ENCODE measurements at regions of chr11 and their contacts with region 1.

Region 1: GRCh38 chr11:116193321-116194131 is 579.3 kb downstream of the BUD13 start:
- DNase-seq: peak; percentile 99
- H3K4me3 ChIP-seq: peak overlapping the region; percentile 58
- H3K4me3 Mint-ChIP-seq: peak overlapping the region; percentile 68
- H3K27ac Mint-ChIP-seq: peak overlapping the region; percentile 51
- H3K4me1 ChIP-seq: peaks cover 36% of the 10 kb centered on the region
- H3K4me1 Mint-ChIP-seq: peaks cover 42% of the 10 kb centered on the region
- H3K27me3 ChIP-seq: no peaks in the 10 kb centered on the region
- H3K27me3 Mint-ChIP-seq: no peaks in the 10 kb centered on the region
- CTCF ChIP-seq: peak; percentile 35 to 51

Region 2: DNA sequence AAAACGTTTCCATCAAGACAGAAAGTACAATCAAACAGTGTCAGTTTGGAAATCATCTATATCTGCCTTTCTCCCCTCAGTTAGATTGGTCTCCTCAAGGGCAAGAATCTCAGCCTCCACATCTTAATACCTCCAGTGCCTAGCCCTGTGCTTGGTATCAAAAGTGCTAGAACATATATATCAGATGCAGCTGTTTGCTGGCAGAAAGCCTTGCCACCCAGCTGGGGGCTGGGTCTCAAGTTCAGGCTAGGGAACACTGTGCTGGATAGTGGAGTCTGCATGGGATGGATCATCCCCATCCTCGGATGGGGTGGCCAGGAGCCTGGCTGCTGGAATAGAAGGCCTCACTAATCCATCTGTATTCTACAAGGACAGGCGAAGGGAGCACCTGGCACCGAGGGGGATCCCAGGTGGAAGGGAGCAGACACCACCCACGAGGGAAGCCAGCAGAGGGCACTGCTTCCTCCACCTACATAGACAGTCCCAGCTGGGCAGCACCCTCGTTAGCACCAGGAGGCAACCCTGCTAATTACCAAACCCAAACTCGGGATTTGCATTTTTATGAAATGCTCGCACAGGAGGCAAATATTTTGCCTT is 22.9 kb before region 1 on chr11:
- CTCF ChIA-PET with region 1: interaction called, 10 read pairs
- POLR2A ChIA-PET with region 1: interaction called, 3 read pairs
- intact Hi-C with region 1: loop called (anchors 1 kb)
- DNase-seq: peak in 1 of 2 experiments; percentile 66
- H3K4me3 ChIP-seq: no peak overlapping the region
- H3K4me3 Mint-ChIP-seq: no peak overlapping the region
- H3K27ac Mint-ChIP-seq: no peak overlapping the region
- H3K4me1 ChIP-seq: peaks cover 12% of the 10 kb centered on the region
- H3K4me1 Mint-ChIP-seq: peaks cover 27% of the 10 kb centered on the region
- H3K27me3 ChIP-seq: no peaks in the 10 kb centered on the region
- H3K27me3 Mint-ChIP-seq: no peaks in the 10 kb centered on the region
- CTCF ChIP-seq: peak; percentile 56 to 82

Region 3: GRCh38 chr11:116217006-116217405 is 23.5 kb after region 1 on chr11:
- CTCF ChIA-PET with region 1: interaction called, 13 read pairs
- POLR2A ChIA-PET with region 1: interaction called, 3 read pairs
- intact Hi-C with region 1: loop called (anchors 2 kb)
- DNase-seq: peak; percentile 62 to 73
- H3K4me3 ChIP-seq: no peak overlapping the region
- H3K4me3 Mint-ChIP-seq: no peak overlapping the region
- H3K27ac Mint-ChIP-seq: no peak overlapping the region
- H3K4me1 ChIP-seq: no peaks in the 10 kb centered on the region
- H3K4me1 Mint-ChIP-seq: peaks cover under 1% of the 10 kb centered on the region
- H3K27me3 ChIP-seq: no peaks in the 10 kb centered on the region; the same call in 1 of the 2 replicates
- H3K27me3 Mint-ChIP-seq: no peaks in the 10 kb centered on the region
- CTCF ChIP-seq: peak; percentile 93 to 96

Region 4: DNA sequence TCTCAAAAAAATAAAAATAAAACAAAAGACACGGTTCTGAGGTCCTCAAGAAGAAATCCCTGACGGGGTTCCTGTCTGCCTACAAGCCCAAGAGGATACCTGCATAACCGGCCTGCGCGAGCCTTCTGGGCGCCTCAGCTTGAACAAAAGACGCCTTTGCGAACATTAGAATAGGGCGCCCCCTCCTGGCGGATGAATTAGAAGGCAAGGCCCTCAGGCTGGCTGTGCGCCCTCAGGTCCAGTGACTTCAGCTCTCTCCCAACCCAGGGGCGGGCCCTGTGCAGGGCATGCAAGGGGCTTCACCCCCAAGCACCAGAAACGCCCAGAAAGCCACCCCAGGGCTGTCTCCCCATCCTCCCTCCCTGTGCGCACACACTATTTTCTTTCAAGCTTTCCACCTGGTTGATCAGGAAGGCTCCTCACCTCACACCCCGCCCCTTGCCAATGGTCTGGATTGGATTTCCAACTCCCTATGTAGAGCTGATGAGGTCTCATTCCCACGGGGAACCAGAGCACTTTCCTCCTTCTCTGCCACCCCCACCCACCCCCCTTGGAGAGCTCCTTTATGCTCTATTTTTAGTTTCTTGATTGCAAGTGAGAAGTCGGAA is 306.0 kb after region 1 on chr11:
- CTCF ChIA-PET with region 1: no interaction called
- POLR2A ChIA-PET with region 1: no interaction called
- intact Hi-C with region 1: no loop called
- DNase-seq: peak; percentile 89 to 92
- H3K4me3 ChIP-seq: no peak overlapping the region
- H3K4me3 Mint-ChIP-seq: no peak overlapping the region
- H3K27ac Mint-ChIP-seq: no peak overlapping the region
- H3K4me1 ChIP-seq: peaks cover 7% of the 10 kb centered on the region; the same call in 1 of the 2 replicates
- H3K4me1 Mint-ChIP-seq: no peaks in the 10 kb centered on the region
- H3K27me3 ChIP-seq: no peaks in the 10 kb centered on the region
- H3K27me3 Mint-ChIP-seq: peaks cover 3% of the 10 kb centered on the region
- CTCF ChIP-seq: peak; percentile 86 to 93

Measured in Caco-2 (cell line).